ENCODE measurements at regions of chr21 and their contacts with region 1.

Region 1: GRCh38 chr21:36630485-36631206 is 68.3 kb upstream of the SIM2 start:
- H3K4me3 ChIP-seq: no peak overlapping the region
- H3K27ac ChIP-seq: no peak overlapping the region
- H3K4me1 ChIP-seq: no peaks in the 10 kb centered on the region
- CTCF ChIP-seq: peak; percentile 56

Region 2: DNA sequence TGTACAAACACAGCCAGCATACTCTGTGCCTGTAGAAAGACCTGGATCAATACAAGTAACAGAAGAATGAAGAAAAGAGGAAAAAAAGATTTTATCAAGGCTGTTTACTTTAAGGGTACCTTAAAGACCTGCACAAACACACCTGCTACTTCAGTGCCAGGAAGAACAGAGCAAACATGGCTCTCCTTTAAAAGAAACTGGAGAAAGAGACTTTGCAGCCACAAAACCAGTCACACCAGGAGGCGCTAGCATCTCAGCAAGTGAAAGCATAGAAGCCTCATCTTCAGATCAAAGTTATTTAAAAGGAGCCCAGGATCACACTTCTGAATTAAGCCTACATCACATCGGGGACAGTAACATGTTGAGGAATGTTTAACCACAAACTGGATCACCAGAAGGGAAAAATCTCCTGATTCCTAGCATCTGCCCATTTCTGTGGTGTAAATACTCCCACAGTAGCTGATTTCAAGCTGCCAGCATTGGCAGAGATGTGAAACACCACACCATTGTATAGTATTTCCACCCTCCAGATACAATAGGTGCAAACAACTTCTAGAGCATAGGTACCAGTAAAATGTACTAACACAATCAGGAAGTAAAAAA is 45.6 kb before region 1 on chr21:
- CTCF ChIA-PET with region 1: interaction called, 10 read pairs
- POLR2A ChIA-PET with region 1: no interaction called
- H3K4me3 ChIP-seq: no peak overlapping the region
- H3K27ac ChIP-seq: no peak overlapping the region
- H3K4me1 ChIP-seq: no peaks in the 10 kb centered on the region; the same call in 1 of the 2 replicates
- CTCF ChIP-seq: no peak

Region 3: DNA sequence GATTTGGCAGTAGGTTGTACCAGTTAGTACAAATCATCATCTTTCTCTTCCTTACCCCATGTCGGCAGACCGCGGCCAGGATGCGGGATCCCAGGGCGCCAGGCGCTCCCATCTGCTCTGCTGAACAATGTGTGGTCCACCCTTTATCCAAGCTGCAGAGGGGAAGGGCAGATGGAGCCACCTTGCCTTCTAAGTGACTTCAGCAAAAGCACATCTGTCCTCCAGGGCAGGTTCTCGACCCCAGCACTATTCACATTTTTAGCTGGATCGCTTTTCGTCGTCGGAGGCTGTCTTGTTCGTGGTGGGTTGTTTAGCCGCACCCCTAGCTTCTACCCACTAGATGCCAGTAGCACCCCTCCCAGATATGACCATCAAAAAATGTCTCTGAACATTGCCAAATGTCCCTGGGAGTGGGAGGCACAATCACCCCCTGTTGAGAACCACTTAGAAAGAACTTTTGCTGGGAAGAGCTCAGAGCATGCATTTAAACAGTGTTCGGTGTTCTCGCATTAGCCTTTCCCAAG is 10.1 kb after region 1 on chr21:
- CTCF ChIA-PET with region 1: interaction called, 60 read pairs
- POLR2A ChIA-PET with region 1: no interaction called
- H3K4me3 ChIP-seq: no peak overlapping the region
- H3K27ac ChIP-seq: peak overlapping the region; percentile 56; the same call in 1 of the 2 replicates
- H3K4me1 ChIP-seq: peaks cover 15% of the 10 kb centered on the region
- CTCF ChIP-seq: peak; percentile 66

Region 4: DNA sequence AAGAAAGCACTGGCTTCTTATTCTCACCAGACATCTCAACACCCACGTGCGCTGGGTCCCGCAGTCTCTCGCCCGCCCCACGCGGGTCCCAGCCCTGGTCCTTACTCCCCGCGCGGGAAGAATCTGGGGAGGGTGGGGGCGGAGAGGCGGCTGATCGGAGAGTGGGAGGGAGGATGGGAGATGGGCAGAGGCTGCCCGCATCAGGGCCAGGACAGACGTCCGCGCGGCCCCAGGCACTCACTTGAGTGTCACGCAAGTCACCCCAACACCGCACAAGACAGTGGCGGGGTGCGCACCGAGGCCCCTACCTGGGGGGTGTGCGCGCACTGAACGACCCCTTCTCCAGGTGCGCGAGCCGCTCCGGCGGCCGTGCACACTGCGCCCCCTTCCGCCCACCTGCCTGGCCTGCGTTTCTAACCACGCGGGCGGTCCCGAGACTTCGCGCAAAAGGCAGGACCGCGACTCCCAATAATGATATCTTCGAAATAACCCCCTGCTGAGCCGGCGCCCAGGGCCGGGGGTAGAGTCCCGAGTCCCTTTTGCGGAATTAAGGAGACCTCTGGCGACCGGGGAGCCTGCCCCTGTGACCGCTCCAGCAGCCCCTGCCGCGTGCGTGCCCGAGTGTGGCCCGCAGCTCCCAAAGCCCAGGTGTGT is 62.3 kb after region 1 on chr21:
- CTCF ChIA-PET with region 1: interaction called, 30 read pairs
- POLR2A ChIA-PET with region 1: no interaction called
- H3K4me3 ChIP-seq: peak overlapping the region; percentile 34
- H3K27ac ChIP-seq: peak overlapping the region; percentile 19; the same call in 1 of the 2 replicates
- H3K4me1 ChIP-seq: peaks cover 6% of the 10 kb centered on the region
- CTCF ChIP-seq: peak; percentile 42

Region 5: GRCh38 chr21:36859744-36860501 is 229.3 kb after region 1 on chr21:
- CTCF ChIA-PET with region 1: interaction called, 64 read pairs
- POLR2A ChIA-PET with region 1: no interaction called
- H3K4me3 ChIP-seq: no peak overlapping the region
- H3K27ac ChIP-seq: no peak overlapping the region
- H3K4me1 ChIP-seq: peaks cover 9% of the 10 kb centered on the region
- CTCF ChIP-seq: no peak